Posterior cingulate gyrus (tissue), 11 donors: ENCODE measurements at regions of chrX and their contacts with region 1.

Region 1: DNA sequence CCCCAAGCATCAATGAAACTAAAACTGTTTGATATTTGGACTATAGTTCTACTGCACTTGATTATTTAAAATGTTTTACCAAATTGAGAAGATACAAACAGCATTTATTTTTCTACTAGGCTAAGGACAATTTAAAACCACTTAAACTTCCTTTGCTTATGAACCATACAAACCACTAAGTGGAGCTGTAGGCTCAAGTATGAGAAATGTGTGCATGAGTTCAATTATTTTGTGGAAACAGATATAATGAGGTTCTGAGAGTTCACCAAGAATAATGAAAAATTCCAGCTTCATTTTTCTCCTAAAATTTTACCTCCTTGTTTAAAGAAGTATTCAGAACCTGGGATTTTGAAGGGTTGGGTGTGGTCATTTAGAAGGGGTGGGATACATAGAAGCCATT is 63.1 kb downstream of the SERPINA7 start:
- DNase-seq: no peak

Region 2: GRCh38 chrX:106397801-106398538 is 422.6 kb after region 1 on chrX:
- intact Hi-C with region 1: loop called (anchors 5 kb)
- DNase-seq: no peak